Mucosa of descending colon (tissue), 3 donors: ENCODE measurements at regions of chr9 and their contacts with region 1.

Region 1: DNA sequence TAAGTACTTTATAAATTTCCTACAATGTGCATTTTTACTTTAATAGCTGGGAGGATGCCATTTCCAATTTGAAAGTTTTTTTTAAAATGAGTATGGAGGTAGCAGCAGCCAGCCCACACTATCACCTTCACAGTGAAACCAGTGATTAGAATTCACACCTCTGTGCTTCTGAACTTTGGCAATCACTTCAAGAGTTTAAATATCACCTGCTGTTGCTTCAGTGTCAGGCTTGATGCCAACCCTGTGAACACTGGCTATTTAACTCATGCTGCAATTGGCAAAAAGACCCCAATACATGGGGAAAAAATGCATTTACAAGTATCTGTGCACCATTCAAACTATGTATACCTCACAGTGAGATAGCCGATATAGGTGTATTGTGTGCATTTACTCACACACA is 57.4 kb downstream of the CDK5RAP2 start:
- DNase-seq: no peak
- ATAC-seq: no peak
- H3K4me3 ChIP-seq: no peak overlapping the region
- H3K4me1 ChIP-seq: no peaks in the 10 kb centered on the region
- CTCF ChIP-seq: no peak

Region 2: GRCh38 chr9:120490888-120491595 is 31.5 kb before region 1 on chr9:
- intact Hi-C with region 1: loop called in 1 of 2 experiments (anchors 2 kb)
- DNase-seq: no peak
- ATAC-seq: peak; percentile 50
- H3K4me3 ChIP-seq: no peak overlapping the region
- H3K4me1 ChIP-seq: no peaks in the 10 kb centered on the region
- CTCF ChIP-seq: no peak

Region 3: GRCh38 chr9:120603591-120603990 is 81.0 kb after region 1 on chr9:
- intact Hi-C with region 1: no loop called
- DNase-seq: peak in 1 of 3 donors; percentile 17
- ATAC-seq: peak; percentile 87
- H3K4me3 ChIP-seq: no peak overlapping the region
- H3K4me1 ChIP-seq: no peaks in the 10 kb centered on the region
- CTCF ChIP-seq: no peak